ENCODE measurements at regions of chr5 and their contacts with region 1.

Region 1: GRCh38 chr5:62354028-62354874 is 48.2 kb downstream of the KIF2A start:
- DNase-seq: peak; percentile 65
- ATAC-seq: peak; percentile 82
- H3K4me3 ChIP-seq: no peak overlapping the region
- H3K27ac ChIP-seq: no peak overlapping the region
- H3K4me1 ChIP-seq: no peaks in the 10 kb centered on the region
- H3K27me3 ChIP-seq: no peaks in the 10 kb centered on the region
- CTCF ChIP-seq: peak; percentile 58
- POLR2A ChIP-seq: no peak
- RAD21 ChIP-seq: peak; percentile 56

Region 2: DNA sequence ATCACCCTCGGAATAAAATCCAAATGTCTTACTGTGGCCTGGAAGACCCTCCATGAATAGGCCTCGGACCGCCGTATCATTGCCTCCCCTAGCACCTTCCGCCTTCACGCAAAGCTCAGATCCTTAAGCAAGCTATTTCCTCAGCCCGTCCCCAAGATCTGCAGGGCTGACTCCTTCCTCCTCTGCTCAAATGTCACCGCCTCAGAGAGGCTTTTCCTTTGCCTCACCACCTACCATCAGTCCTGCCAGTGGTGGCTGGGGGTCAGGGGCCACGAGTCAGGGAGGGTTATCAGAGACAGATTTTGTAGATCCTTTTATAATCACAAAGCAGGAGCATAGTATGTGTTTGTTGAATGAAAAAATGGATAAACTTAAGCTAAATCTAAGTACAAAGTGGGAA is 122.7 kb before region 1 on chr5:
- CTCF ChIA-PET with region 1: no interaction called
- POLR2A ChIA-PET with region 1: no interaction called
- dilution Hi-C with region 1: no loop called
- in situ Hi-C with region 1: loop called (anchors 10 kb)
- intact Hi-C with region 1: no loop called
- DNase-seq: no peak
- ATAC-seq: no peak
- H3K4me3 ChIP-seq: no peak overlapping the region
- H3K27ac ChIP-seq: no peak overlapping the region
- H3K4me1 ChIP-seq: no peaks in the 10 kb centered on the region
- H3K27me3 ChIP-seq: no peaks in the 10 kb centered on the region
- CTCF ChIP-seq: no peak
- POLR2A ChIP-seq: no peak
- RAD21 ChIP-seq: no peak

Region 3: GRCh38 chr5:62306892-62307689 is 47.2 kb before region 1 on chr5:
- CTCF ChIA-PET with region 1: no interaction called
- POLR2A ChIA-PET with region 1: no interaction called
- dilution Hi-C with region 1: no loop called
- in situ Hi-C with region 1: no loop called
- intact Hi-C with region 1: loop called (anchors 1 kb)
- DNase-seq: peak; percentile 35
- ATAC-seq: peak; percentile 3
- H3K4me3 ChIP-seq: peak overlapping the region; percentile 98
- H3K27ac ChIP-seq: peak overlapping the region; percentile 91
- H3K4me1 ChIP-seq: 0 out of 2 replicates have a peak, but pooled peaks cover 2% of the 10 kb centered on the region
- H3K27me3 ChIP-seq: no peaks in the 10 kb centered on the region
- CTCF ChIP-seq: no peak
- POLR2A ChIP-seq: no peak
- RAD21 ChIP-seq: no peak

Region 4: DNA sequence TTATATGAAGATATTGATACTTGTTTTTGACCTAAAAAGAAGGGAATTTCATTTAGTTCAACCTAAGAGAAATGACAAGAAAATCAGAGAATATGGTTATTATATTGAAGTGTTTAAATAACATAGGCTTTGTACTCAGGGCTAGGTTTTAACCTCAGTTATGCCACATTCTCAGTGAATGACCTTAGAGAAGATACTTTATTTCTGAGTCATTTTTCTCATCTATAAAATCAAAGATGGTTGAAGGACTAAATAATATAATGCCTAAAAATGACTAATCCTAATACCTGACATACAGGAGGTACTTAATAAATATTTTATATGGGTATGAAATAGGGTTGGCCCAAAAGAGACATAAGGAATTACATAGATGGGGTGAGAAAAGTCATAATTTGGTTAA is 17.2 kb after region 1 on chr5:
- CTCF ChIA-PET with region 1: no interaction called
- POLR2A ChIA-PET with region 1: no interaction called
- dilution Hi-C with region 1: no loop called
- in situ Hi-C with region 1: no loop called
- intact Hi-C with region 1: no loop called
- DNase-seq: peak; percentile 2
- ATAC-seq: no peak
- H3K4me3 ChIP-seq: no peak overlapping the region
- H3K27ac ChIP-seq: no peak overlapping the region
- H3K4me1 ChIP-seq: no peaks in the 10 kb centered on the region
- H3K27me3 ChIP-seq: no peaks in the 10 kb centered on the region
- CTCF ChIP-seq: no peak
- POLR2A ChIP-seq: no peak
- RAD21 ChIP-seq: no peak